Activated T-helper 1 cell treated with anti-CD3 and anti-CD28 coated beads, Interleukin-12 subunit alpha, Interleukin-12 subunit beta, Interleukin-2, Interleukin-4 antibody, amounts not matched to agents 30 ng/mL and 10 ng/mL and 1 ng/mL, durations not matched to agents 14 hours and 24 hours and 36 hours (primary cell): ENCODE measurements at regions of chr11 and their contacts with region 1.

Region 1: DNA sequence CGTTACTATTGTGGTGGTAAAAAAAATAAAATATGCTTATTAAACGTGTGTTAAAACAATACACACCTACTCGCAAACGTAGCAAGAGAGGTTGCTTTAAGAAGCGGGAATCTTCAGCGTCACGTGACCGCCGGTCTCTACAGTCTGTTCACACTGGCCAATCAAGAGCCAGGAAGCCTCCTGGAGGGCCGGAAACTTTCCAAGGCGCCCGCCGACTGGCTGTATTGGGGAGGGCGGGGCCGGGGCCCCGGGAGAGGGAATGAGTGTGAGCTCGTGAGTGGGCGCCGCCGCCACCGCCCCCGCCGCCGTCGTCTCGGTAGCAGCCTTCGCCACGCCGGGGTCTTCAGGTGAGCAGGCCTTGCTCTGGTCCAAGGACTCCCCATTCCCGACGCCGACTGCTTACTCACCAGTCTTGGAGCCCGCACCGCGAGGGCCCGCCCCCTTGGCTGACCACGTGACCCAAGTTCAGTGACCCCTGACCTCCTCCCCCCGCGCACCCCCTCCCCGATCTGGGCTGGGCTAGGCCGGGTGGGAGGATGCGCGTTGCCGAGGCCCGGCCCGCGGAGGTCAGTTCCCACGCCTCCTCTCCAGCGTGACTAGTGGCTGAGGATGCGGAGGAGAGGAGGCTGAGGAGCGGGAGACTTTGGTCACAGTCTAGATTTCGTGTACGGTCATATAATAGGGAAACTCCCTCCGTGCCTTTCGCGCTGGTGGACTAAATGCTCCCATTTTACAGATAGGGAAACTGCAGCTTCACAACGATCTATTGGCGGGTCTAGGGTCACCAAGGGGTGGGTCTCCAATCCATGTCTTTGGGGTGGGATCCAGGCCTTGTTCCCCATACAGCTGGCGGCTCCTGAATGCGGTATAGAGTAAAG is at the start of gene TAF6L:
- DNase-seq: peak; percentile 91
- H3K4me3 Mint-ChIP-seq: peak within 1 kb of the TSS; percentile 89
- H3K27ac Mint-ChIP-seq: peak within 1 kb of the TSS; percentile 91
- H3K4me1 Mint-ChIP-seq: peaks cover 30% of the 10 kb centered on the region
- H3K27me3 Mint-ChIP-seq: no peaks in the 10 kb centered on the region
- total RNA-seq, gene TAF6L: 19.4 and 20.7 TPM in 2 replicates

Region 2: DNA sequence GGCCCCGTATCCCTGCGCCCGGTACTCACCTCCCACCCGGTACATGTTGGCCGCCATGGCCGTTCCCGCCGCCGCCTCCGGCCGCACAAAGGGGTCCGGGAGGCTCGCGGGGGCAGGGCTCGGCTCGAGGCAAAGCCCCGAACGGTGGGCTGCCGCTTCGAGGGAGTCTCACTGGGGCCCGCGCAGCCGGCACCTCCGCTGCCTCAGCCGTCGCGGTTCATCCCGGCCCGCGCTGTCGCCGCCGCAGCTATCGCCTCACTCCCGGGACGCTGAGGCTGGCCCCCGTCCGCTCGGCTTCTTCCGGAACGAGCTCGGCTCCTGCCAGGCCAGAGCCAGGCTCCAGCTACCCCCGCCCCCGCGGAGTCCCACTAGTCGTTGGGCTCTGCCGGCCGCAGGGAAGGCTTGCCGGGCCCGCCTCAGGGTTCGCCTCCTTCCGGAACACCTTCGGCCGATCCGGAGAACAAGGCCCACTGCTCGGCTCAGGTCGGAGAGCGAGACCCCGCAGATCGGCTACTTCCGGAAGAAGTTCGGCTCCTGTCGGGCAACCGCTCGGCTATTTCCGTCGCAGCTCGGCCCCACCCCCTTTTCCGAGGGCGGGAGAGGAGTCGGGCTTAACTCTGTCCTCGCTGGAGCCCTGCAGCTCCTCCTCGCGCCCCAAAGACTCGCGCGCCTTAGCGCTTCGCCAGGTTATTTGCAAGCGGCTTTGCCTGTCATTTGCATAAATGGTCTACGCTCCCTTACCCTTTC is 169.8 kb before region 1 on chr11 and contains the start of gene MTA2:
- intact Hi-C with region 1: loop called (anchors 1 kb)
- DNase-seq: peak; percentile 100
- H3K4me3 Mint-ChIP-seq: peak within 1 kb of the TSS; percentile 95
- H3K27ac Mint-ChIP-seq: peak within 1 kb of the TSS; percentile 92
- H3K4me1 Mint-ChIP-seq: peaks cover 54% of the 10 kb centered on the region
- H3K27me3 Mint-ChIP-seq: no peaks in the 10 kb centered on the region
- total RNA-seq, gene MTA2: 224 and 230 TPM in 2 replicates

Region 3: GRCh38 chr11:62753736-62754603 is 17.4 kb before region 1 on chr11 and contains the start of gene ZBTB3:
- intact Hi-C with region 1: loop called (anchors 1 kb)
- DNase-seq: peak; percentile 95
- H3K4me3 Mint-ChIP-seq: peak within 1 kb of the TSS; percentile 89
- H3K27ac Mint-ChIP-seq: peak within 1 kb of the TSS; percentile 91
- H3K4me1 Mint-ChIP-seq: peaks cover 12% of the 10 kb centered on the region
- H3K27me3 Mint-ChIP-seq: no peaks in the 10 kb centered on the region
- total RNA-seq, gene ZBTB3: 8.7 and 9.1 TPM in 2 replicates

Region 4: DNA sequence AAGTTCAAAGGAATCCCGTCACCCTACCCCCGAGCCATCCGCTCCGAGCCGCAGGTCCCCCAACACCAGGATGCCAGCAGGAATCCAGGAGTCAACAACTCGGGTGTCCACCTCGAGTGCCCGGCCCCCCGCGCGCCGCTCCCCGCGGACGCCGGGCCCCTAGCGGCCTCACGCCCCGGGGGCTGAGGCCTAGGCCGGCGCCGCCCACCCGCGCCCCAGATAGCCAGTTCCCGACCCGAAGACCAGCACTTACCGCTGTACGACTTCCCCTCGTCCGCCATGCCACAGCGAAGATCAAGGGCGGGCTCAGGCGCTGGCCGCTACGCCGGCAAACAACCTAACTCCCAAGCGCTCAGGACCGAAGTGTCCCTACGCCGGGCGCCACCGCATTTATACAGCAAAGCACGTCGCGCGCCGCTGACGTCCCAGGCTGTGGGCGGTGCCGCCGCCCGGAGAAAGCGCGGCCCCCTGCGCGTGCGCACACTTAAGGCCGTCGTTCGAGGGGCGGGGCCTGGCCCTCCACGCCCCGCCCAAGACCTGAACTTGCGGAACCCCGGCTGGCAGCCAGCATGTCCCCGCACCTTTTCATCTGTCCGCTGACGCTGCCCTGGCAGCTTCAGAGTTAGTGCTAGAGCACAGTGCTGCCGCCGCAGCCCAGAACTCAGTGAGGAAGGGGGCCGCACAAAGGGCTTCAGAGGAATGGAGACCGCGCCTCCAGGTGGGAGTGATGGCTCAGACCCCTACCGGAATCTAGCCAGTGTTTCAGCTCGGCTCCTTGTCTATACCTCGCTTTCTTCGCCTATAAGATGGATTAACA is 33.9 kb after region 1 on chr11 and contains the start of gene NXF1:
- intact Hi-C with region 1: loop called (anchors 1 kb)
- DNase-seq: peak; percentile 95
- H3K4me3 Mint-ChIP-seq: peak within 1 kb of the TSS; percentile 100
- H3K27ac Mint-ChIP-seq: peak within 1 kb of the TSS; percentile 99
- H3K4me1 Mint-ChIP-seq: peaks cover 40% of the 10 kb centered on the region
- H3K27me3 Mint-ChIP-seq: peaks cover 2% of the 10 kb centered on the region
- total RNA-seq, gene NXF1: 155 and 158 TPM in 2 replicates

Region 5: GRCh38 chr11:62841361-62842184 is 70.2 kb after region 1 on chr11:
- intact Hi-C with region 1: loop called (anchors 1 kb)
- DNase-seq: peak; percentile 83
- H3K4me3 Mint-ChIP-seq: no peak overlapping the region
- H3K27ac Mint-ChIP-seq: no peak overlapping the region
- H3K4me1 Mint-ChIP-seq: peaks cover 18% of the 10 kb centered on the region
- H3K27me3 Mint-ChIP-seq: no peaks in the 10 kb centered on the region

Region 6: DNA sequence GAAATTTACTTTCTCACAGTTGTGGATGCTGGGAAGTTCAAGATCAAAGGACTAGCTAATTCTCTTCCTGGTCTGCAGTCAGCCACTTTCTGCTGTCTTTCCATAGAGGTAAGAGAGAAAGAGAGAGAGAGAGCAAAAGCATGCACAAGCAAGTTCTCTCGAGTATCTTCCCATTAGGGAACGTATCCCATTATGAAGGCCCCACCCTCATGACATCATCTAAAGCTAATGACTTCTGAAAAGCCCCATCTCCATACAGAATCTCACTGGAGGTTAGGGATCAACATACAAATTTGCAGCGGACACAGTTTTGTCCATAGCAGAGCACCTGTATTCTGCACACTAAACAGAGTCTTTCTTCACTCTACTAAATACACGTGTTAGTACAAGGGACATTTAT is 580.8 kb after region 1 on chr11:
- intact Hi-C with region 1: no loop called
- DNase-seq: no peak
- H3K4me3 Mint-ChIP-seq: no peak overlapping the region
- H3K27ac Mint-ChIP-seq: no peak overlapping the region
- H3K4me1 Mint-ChIP-seq: no peaks in the 10 kb centered on the region
- H3K27me3 Mint-ChIP-seq: no peaks in the 10 kb centered on the region

Region 7: GRCh38 chr11:63681321-63682049 is 910.1 kb after region 1 on chr11 and contains the start of gene RTN3:
- intact Hi-C with region 1: loop called (anchors 5 kb)
- DNase-seq: peak; percentile 100
- H3K4me3 Mint-ChIP-seq: peak within 1 kb of the TSS; percentile 91
- H3K27ac Mint-ChIP-seq: peak within 1 kb of the TSS; percentile 91
- H3K4me1 Mint-ChIP-seq: peaks cover 32% of the 10 kb centered on the region
- H3K27me3 Mint-ChIP-seq: peaks cover 11% of the 10 kb centered on the region
- total RNA-seq, gene RTN3: 52.1 and 54.7 TPM in 2 replicates